ENCODE measurements at regions of chr21 and their contacts with region 1.

Region 1: GRCh38 chr21:35981514-35982070 is 78.7 kb downstream of the SETD4 start:
- DNase-seq: no peak
- H3K4me3 ChIP-seq: peak overlapping the region in 1 of 3 donors; percentile 31
- H3K27ac ChIP-seq: peak overlapping the region in 1 of 2 donors; percentile 32
- H3K4me1 ChIP-seq: no peaks in the 10 kb centered on the region
- H3K27me3 ChIP-seq: no peaks in the 10 kb centered on the region
- CTCF ChIP-seq: no peak
- POLR2A ChIP-seq: no peak

Region 2: GRCh38 chr21:35145626-35146233 is 835.9 kb before region 1 on chr21:
- intact Hi-C with region 1: no loop called
- DNase-seq: no peak
- H3K4me3 ChIP-seq: no peak overlapping the region
- H3K27ac ChIP-seq: peak overlapping the region in 1 of 2 donors; percentile 3
- H3K4me1 ChIP-seq: no peaks in the 10 kb centered on the region
- H3K27me3 ChIP-seq: no peaks in the 10 kb centered on the region
- CTCF ChIP-seq: no peak
- POLR2A ChIP-seq: no peak

Region 3: GRCh38 chr21:35953615-35954014 is 28.0 kb before region 1 on chr21:
- intact Hi-C with region 1: loop called (anchors 2 kb)
- DNase-seq: no peak
- H3K4me3 ChIP-seq: no peak overlapping the region
- H3K27ac ChIP-seq: no peak overlapping the region
- H3K4me1 ChIP-seq: no peaks in the 10 kb centered on the region
- H3K27me3 ChIP-seq: no peaks in the 10 kb centered on the region
- CTCF ChIP-seq: no peak
- POLR2A ChIP-seq: no peak

Measured in breast epithelium (tissue), 4 donors.